ENCODE measurements at regions of chr5 and their contacts with region 1.

Region 1: GRCh38 chr5:138352071-138352721 is at the start of gene KDM3B:
- DNase-seq: peak; percentile 89
- H3K4me3 Mint-ChIP-seq: peak within 1 kb of the TSS; percentile 84
- H3K27ac Mint-ChIP-seq: peak within 1 kb of the TSS; percentile 95
- H3K4me1 Mint-ChIP-seq: peaks cover 40% of the 10 kb centered on the region
- H3K27me3 Mint-ChIP-seq: peaks cover 3% of the 10 kb centered on the region

Region 2: DNA sequence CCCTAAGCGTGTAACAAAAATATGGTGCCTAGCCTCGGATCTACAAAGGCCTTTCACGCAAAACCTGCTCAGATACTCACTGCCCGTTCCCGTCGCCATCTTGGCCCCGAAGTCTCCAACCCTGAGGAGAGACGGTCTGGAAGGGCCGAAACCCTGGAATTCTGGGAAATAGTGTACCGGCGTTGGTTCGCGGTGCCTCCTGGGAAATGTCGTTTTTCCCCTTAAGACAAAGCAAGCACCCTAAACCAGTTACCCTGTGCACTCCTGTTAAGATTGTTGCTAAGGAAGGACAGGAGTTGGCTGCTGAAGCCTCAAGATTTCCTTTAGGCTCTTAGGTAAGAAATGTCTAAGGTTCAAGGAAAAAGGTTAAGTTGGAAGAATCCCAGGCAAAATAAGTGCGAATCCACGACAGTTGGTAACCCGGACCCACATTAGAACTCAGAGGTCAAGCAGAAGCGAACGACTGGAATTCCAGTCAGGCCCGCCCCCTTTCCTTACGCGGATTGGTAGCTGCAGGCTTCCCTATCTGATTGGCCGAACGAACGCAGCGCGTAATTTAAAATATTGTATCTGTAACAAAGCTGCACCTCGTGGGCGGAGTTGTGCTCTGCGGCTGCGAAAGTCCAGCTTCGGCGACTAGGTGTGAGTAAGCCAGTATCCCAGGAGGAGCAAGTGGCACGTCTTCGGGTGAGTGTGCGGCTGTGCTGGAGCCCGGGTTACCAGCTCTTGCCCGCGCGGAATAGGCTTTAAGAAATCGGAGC is 173.5 kb before region 1 on chr5 and contains the starts of genes BRD8 and KIF20A:
- CTCF ChIA-PET with region 1: interaction called, 23 read pairs
- DNase-seq: peak; percentile 97
- H3K4me3 Mint-ChIP-seq: no peak within 1 kb of the TSS
- H3K27ac Mint-ChIP-seq: no peak within 1 kb of the TSS
- H3K4me1 Mint-ChIP-seq: peaks cover 26% of the 10 kb centered on the region
- H3K27me3 Mint-ChIP-seq: no peaks in the 10 kb centered on the region

Region 3: GRCh38 chr5:138213161-138214029 is 138.8 kb before region 1 on chr5 and contains the start of gene CDC23:
- CTCF ChIA-PET with region 1: interaction called, 19 read pairs
- DNase-seq: peak; percentile 95
- H3K4me3 Mint-ChIP-seq: peak within 1 kb of the TSS; percentile 100
- H3K27ac Mint-ChIP-seq: peak within 1 kb of the TSS; percentile 98
- H3K4me1 Mint-ChIP-seq: peaks cover 25% of the 10 kb centered on the region
- H3K27me3 Mint-ChIP-seq: no peaks in the 10 kb centered on the region

Region 4: GRCh38 chr5:138331449-138332368 is 20.5 kb before region 1 on chr5 and contains the start of gene CDC25C:
- CTCF ChIA-PET with region 1: interaction called, 209 read pairs
- DNase-seq: peak; percentile 99
- H3K4me3 Mint-ChIP-seq: peak within 1 kb of the TSS; percentile 78
- H3K27ac Mint-ChIP-seq: peak within 1 kb of the TSS; percentile 75
- H3K4me1 Mint-ChIP-seq: peaks cover 30% of the 10 kb centered on the region
- H3K27me3 Mint-ChIP-seq: peaks cover 3% of the 10 kb centered on the region

Region 5: DNA sequence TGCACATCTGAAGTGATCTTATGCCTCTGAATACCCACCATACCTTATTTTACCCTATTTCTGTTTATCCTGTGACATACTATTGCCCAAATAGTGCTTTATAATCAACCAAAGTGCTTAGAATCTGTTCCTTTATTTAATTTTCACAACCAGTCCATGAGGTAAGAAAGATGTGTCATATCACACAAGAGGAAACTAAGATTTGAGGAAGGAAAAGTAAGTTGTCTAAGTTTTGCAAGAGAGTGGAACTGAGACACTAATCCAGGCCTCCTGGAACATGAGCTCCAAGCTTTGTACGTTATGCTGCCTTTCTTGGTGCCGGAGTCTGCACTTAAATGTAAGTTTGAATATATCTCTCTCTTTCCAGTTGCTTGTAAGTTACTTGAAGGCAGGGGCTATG is 17.5 kb after region 1 on chr5:
- CTCF ChIA-PET with region 1: interaction called, 22 read pairs
- DNase-seq: no peak
- H3K4me3 Mint-ChIP-seq: no peak overlapping the region
- H3K27ac Mint-ChIP-seq: no peak overlapping the region
- H3K4me1 Mint-ChIP-seq: peaks cover 2% of the 10 kb centered on the region
- H3K27me3 Mint-ChIP-seq: no peaks in the 10 kb centered on the region

Measured in activated naive CD4-positive, alpha-beta T cell treated with anti-CD3 and anti-CD28 coated beads, Interleukin-2, amount 10 ng/mL, durations not matched to agents 7 days and 5 days (primary cell).